ENCODE measurements at regions of chr14 and their contacts with region 1.

Region 1: DNA sequence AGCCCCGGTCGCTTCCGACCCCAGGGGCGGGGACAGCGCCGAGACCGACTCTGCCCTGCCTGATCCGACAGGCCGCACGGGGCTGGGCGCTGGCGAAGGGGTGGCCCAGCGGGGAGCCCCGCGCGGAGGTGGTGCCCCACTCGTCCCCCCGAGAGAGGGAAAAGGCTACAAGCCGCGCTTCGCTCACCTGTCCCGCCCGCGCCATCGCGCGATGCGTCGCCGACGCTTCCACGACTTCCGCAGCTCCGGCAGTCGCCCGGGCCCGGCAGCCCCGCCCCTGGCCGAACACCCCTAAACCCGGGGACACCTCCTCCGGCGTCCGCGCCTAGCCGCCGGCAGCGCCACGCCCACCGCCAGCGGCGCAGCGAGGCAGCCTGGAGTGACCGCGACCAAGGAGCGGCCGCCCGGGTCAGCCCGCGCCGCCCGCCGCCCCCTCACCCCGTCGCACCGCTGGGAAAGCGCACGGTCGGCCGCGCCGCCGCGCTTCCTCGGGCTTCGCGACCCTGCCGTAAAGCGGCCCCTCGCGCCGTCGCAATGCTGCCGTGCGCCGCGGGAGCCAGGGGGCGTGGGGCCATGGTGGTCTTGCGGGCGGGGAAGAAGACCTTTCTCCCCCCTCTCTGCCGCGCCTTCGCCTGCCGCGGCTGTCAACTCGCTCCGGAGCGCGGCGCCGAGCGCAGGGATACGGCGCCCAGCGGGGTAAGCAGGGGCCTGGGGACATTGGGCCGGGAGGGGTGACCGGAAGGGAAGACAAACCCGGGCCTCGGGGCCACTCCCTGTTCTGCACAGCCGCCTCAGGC is at the starts of genes BAG5 and COA8:
- DNase-seq: peak; percentile 96
- H3K4me3 Mint-ChIP-seq: peak within 1 kb of the TSS; percentile 100
- H3K27ac Mint-ChIP-seq: peak within 1 kb of the TSS; percentile 91
- H3K4me1 Mint-ChIP-seq: peaks cover 41% of the 10 kb centered on the region
- H3K27me3 Mint-ChIP-seq: no peaks in the 10 kb centered on the region
- total RNA-seq, gene BAG5: 32.1 and 33.9 TPM in 2 replicates
- total RNA-seq, gene COA8: 38.4 and 41.2 TPM in 2 replicates

Region 2: GRCh38 chr14:103528587-103529382 is 33.8 kb before region 1 on chr14 and contains the start of gene TRMT61A:
- intact Hi-C with region 1: loop called (anchors 2 kb)
- DNase-seq: peak; percentile 92
- H3K4me3 Mint-ChIP-seq: peak within 1 kb of the TSS; percentile 96
- H3K27ac Mint-ChIP-seq: peak within 1 kb of the TSS; percentile 97
- H3K4me1 Mint-ChIP-seq: peaks cover 28% of the 10 kb centered on the region
- H3K27me3 Mint-ChIP-seq: peaks cover 12% of the 10 kb centered on the region
- total RNA-seq, gene TRMT61A: 22.7 and 23.6 TPM in 2 replicates

Region 3: DNA sequence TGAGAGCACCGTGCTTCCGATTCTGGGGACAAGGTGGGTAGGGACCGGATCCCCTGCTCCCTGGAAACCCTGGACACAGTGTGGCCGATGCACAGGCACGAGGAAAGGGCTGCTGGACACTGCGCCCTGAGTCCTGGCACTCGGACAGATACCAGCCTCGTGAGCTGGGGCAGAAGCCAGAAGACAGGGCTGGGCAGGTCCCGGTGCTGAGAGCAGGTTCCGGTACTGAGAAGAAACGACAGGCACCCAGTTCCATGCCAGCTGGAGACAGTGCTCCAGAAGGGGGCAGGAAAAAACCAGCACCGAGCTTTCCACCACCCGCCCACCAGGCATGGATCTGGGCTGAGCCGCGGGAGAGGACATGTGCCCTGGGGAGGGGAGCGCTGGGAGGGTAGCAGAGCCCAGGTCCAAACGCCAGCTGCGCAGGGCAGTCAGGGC is 146.1 kb after region 1 on chr14:
- intact Hi-C with region 1: no loop called
- DNase-seq: no peak
- H3K4me3 Mint-ChIP-seq: no peak overlapping the region
- H3K27ac Mint-ChIP-seq: peak overlapping the region; percentile 37
- H3K4me1 Mint-ChIP-seq: peaks cover 15% of the 10 kb centered on the region
- H3K27me3 Mint-ChIP-seq: no peaks in the 10 kb centered on the region

Region 4: DNA sequence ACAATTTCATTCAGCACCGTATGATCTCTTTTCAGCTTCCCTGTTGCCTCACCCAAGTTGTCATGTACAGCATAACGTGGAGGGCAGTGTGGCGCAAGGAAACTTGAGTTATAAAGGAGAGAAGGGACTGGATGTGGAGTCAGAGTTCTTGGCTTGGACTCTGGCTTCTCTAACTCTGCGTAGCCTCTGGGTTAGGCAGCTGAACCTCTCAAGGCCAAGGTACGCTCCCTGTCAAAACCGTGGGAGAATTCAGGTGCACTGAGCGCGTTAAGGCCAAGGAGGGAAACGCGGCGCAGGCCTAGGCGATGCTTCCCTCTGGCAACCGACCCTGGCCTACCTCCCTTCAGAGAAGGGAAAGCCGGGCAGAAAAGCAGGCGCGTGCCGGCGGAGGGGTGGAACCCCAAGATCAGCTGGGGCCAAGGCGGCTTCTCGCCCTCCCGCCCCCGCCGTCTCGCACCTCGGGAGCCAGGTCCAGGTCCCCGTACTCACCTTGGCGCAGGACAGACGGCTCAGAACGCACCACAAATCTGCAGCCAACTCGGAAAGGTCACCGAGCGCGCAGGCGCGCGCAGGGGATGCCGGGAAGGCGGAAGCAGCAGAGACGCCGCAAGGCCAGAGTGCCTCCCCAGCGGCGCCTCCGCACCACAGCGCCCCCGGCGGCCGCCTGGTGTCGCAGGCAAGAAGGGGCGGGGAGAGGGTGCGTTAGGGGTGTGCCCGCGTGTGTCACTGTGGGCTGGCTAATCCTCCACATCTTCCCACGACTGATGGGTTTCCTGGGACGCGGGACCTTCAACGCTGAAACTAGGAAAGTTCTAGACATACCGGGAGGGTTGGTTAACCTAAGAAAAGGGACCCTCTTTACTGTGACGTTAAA is 358.6 kb after region 1 on chr14:
- intact Hi-C with region 1: loop called (anchors 2 kb)
- DNase-seq: peak; percentile 99
- H3K4me3 Mint-ChIP-seq: peak overlapping the region; percentile 93
- H3K27ac Mint-ChIP-seq: peak overlapping the region; percentile 87
- H3K4me1 Mint-ChIP-seq: peaks cover 9% of the 10 kb centered on the region
- H3K27me3 Mint-ChIP-seq: peaks cover 9% of the 10 kb centered on the region